Caco-2 (cell line): ENCODE measurements at regions of chr2 and their contacts with region 1.

Region 1: GRCh38 chr2:64101141-64101591 is 43.1 kb downstream of the PELI1 start:
- DNase-seq: no peak
- H3K4me3 ChIP-seq: no peak overlapping the region
- H3K4me3 Mint-ChIP-seq: no peak overlapping the region
- H3K27ac Mint-ChIP-seq: no peak overlapping the region
- H3K4me1 ChIP-seq: peaks cover 92% of the 10 kb centered on the region
- H3K4me1 Mint-ChIP-seq: peaks cover 73% of the 10 kb centered on the region
- H3K27me3 ChIP-seq: no peaks in the 10 kb centered on the region
- H3K27me3 Mint-ChIP-seq: no peaks in the 10 kb centered on the region
- CTCF ChIP-seq: no peak

Region 2: DNA sequence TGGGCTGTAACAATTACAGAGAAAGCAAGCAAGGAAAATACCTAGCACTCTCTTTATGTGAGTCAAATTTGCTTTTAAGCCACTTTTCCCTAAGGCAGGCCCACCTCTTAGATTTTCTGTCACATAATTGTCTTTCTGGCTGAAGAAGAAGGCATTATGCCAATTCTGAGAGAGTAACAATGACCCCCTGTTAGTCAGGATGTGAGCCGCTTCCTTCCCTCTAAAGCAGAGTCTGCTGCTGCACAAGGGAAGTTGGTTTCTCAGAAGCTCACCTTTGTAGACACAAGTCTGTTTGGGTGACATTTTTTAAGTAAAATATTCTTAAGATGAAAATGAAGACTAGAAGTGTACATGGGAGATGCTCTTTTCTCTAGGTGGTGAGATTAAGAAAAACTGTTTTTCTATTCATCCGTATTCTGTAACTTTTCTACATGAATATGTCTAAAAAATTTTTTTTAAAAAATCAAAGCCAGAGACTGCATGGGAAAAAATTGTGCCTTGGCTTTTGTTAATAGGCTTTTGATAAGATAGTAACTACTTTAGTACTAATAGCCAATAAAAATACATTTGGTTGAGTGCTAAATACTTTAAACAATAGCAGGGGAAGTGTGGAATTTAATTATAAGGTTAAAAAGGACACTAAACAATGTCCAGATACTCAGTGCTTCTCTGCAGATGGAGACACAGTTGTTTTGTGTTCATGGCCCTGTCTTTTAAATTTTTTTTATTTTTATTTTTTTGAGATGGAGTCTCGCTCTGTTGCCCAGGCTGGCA is 48.5 kb before region 1 on chr2:
- CTCF ChIA-PET with region 1: interaction called, 8 read pairs
- POLR2A ChIA-PET with region 1: no interaction called
- intact Hi-C with region 1: loop called (anchors 2 kb)
- DNase-seq: no peak
- H3K4me3 ChIP-seq: no peak overlapping the region
- H3K4me3 Mint-ChIP-seq: no peak overlapping the region
- H3K27ac Mint-ChIP-seq: peak overlapping the region; percentile 32
- H3K4me1 ChIP-seq: peaks cover 26% of the 10 kb centered on the region
- H3K4me1 Mint-ChIP-seq: peaks cover 41% of the 10 kb centered on the region
- H3K27me3 ChIP-seq: no peaks in the 10 kb centered on the region
- H3K27me3 Mint-ChIP-seq: no peaks in the 10 kb centered on the region
- CTCF ChIP-seq: no peak

Region 3: GRCh38 chr2:64062829-64063228 is 38.3 kb before region 1 on chr2:
- CTCF ChIA-PET with region 1: no interaction called
- POLR2A ChIA-PET with region 1: no interaction called
- intact Hi-C with region 1: loop called (anchors 5 kb)
- DNase-seq: peak; percentile 62 to 68
- H3K4me3 ChIP-seq: no peak overlapping the region
- H3K4me3 Mint-ChIP-seq: no peak overlapping the region
- H3K27ac Mint-ChIP-seq: peak overlapping the region; percentile 53
- H3K4me1 ChIP-seq: peaks cover 49% of the 10 kb centered on the region
- H3K4me1 Mint-ChIP-seq: peaks cover 30% of the 10 kb centered on the region
- H3K27me3 ChIP-seq: no peaks in the 10 kb centered on the region
- H3K27me3 Mint-ChIP-seq: no peaks in the 10 kb centered on the region
- CTCF ChIP-seq: no peak

Region 4: GRCh38 chr2:64203858-64204632 is 102.9 kb after region 1 on chr2:
- CTCF ChIA-PET with region 1: no interaction called
- POLR2A ChIA-PET with region 1: no interaction called
- intact Hi-C with region 1: no loop called
- DNase-seq: peak; percentile 59 to 65
- H3K4me3 ChIP-seq: no peak overlapping the region
- H3K4me3 Mint-ChIP-seq: peak overlapping the region; percentile 22
- H3K27ac Mint-ChIP-seq: peak overlapping the region; percentile 88
- H3K4me1 ChIP-seq: peaks cover 29% of the 10 kb centered on the region
- H3K4me1 Mint-ChIP-seq: peaks cover 29% of the 10 kb centered on the region
- H3K27me3 ChIP-seq: no peaks in the 10 kb centered on the region
- H3K27me3 Mint-ChIP-seq: no peaks in the 10 kb centered on the region
- CTCF ChIP-seq: no peak

Region 5: DNA sequence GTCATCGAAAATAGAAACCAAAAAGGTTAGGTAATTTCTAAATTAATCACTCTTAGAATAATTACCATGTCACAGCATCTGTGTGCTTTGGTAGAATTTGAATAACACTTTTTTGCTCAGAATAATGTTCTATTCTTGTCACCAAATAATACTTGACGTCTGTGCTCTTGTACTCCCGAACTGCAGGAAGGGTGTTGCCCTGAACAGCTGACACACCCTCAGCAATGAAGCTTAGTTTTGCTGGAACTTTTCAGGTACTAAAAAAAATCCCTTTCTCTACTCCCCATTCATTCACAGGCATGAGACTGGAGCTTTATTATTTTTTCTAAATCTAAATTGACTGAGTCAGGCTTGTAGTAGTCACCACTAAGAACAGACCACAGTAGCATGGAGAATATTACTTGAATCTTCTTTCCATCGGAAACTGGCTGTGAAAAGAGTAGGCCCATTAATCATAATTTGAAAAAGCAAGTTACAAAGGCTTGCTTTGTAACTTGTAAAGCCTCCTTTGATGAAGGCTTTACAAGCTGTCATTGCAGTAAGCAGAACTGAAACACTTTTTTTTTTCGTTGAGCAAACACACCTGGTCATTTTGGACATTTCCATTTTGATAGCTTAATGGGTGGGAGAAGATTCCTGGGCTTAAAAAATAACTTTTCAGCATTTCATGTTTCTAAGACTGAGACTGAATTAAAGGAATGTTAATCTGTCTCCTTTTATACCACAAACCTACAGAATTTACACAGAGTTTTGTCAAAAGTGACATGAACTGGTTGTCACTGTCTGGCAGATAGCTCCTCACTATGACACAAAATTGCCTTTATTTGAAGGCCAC is 113.3 kb after region 1 on chr2:
- CTCF ChIA-PET with region 1: interaction called, 6 read pairs
- POLR2A ChIA-PET with region 1: no interaction called
- intact Hi-C with region 1: loop called (anchors 1 kb)
- DNase-seq: peak in 1 of 2 experiments; percentile 69
- H3K4me3 ChIP-seq: no peak overlapping the region
- H3K4me3 Mint-ChIP-seq: peak overlapping the region; percentile 28
- H3K27ac Mint-ChIP-seq: peak overlapping the region; percentile 37
- H3K4me1 ChIP-seq: peaks cover 26% of the 10 kb centered on the region
- H3K4me1 Mint-ChIP-seq: peaks cover 21% of the 10 kb centered on the region
- H3K27me3 ChIP-seq: no peaks in the 10 kb centered on the region
- H3K27me3 Mint-ChIP-seq: no peaks in the 10 kb centered on the region
- CTCF ChIP-seq: no peak

Region 6: DNA sequence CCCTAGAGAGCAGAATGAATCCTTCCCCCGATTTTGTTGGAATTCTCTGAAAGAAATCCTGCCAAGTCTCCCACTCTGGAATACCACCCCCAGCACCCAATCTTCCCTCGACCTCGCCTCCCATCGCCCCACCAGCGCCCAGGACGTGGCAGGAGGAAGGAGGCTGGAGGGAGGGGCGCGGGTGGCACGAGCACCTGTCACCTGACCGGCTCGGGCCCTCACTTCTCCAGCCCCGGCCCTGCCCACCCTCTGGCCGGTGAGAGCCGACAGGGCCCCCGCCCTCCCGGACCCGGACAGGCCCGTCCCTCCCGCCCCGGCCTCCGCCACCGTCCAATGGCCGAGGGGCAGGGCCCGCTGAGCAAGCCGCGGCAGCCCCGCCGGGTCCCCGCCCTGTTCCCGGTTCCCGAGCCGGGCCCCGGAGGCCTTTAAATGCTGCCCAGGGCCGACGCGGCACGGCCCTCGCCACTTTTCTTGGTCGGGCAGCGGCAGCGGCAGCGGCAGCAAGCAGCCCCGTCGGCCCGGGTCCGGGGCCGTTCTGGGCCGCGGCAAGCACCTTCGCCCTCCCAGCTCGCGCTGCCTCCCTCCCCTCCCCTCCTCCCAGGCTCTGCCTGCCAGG is 352.7 kb after region 1 on chr2 and contains the start of gene LGALSL:
- CTCF ChIA-PET with region 1: no interaction called
- POLR2A ChIA-PET with region 1: no interaction called
- intact Hi-C with region 1: loop called (anchors 5 kb)
- DNase-seq: peak; percentile 93 to 94
- H3K4me3 ChIP-seq: peak within 1 kb of the TSS; percentile 80
- H3K4me3 Mint-ChIP-seq: peak within 1 kb of the TSS; percentile 94
- H3K27ac Mint-ChIP-seq: peak within 1 kb of the TSS; percentile 98
- H3K4me1 ChIP-seq: peaks cover 11% of the 10 kb centered on the region
- H3K4me1 Mint-ChIP-seq: peaks cover 13% of the 10 kb centered on the region
- H3K27me3 ChIP-seq: no peaks in the 10 kb centered on the region
- H3K27me3 Mint-ChIP-seq: no peaks in the 10 kb centered on the region
- CTCF ChIP-seq: no peak
- total RNA-seq, gene LGALSL: 36.9 and 37.2 TPM in 2 replicates